HepG2 (cell line): ENCODE measurements at regions of chr2 and their contacts with region 1.

Region 1: GRCh38 chr2:230160112-230160660 is 59.6 kb downstream of the SP110 start:
- DNase-seq: peak; percentile 37
- ATAC-seq: peak; percentile 79
- H3K4me3 ChIP-seq: no peak overlapping the region
- H3K27ac ChIP-seq: no peak overlapping the region
- H3K4me1 ChIP-seq: no peaks in the 10 kb centered on the region
- H3K27me3 ChIP-seq: peaks cover 2 to 17% of the 10 kb centered on the region in 2 experiments; a peak in 3 of 5 replicates
- CTCF ChIP-seq: peak; percentile 83
- EP300 ChIP-seq: no peak
- POLR2A ChIP-seq: no peak
- RAD21 ChIP-seq: peak; percentile 55

Region 2: DNA sequence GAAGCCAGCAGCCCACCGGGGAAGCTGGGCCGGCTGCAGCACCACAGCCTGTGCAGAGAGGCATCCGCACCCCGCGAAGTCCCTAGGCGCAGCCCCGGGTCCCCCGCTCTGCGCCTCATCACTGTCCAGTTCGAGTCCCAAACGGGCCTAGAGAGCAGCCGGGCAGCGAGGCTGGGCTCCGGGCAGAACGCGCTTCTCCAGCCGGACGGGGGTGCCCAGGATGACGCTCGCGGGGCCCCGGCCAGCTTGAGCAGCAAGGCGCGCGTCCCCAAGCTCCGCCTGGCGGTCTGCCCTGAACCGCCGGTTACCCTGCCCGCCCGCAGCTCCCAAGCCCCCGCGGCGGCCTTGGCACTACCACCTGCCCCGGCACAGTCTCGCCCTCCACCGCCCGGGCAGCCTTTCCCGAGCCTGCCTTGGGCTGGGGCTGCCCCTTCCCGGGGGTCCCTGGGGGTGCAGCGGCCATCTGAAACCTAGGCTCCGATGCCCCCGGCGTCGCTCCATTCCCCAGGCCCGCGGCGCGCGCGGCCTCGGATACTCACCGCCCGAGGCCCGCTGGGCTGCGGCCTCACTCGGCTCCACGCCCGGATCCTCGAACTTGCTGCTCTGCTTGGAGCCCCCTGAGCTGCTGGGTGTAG is 92.1 kb before region 1 on chr2:
- CTCF ChIA-PET with region 1: interaction called, 14 read pairs
- POLR2A ChIA-PET with region 1: no interaction called
- in situ Hi-C with region 1: no loop called
- intact Hi-C with region 1: loop called (anchors 1 kb)
- DNase-seq: no peak
- ATAC-seq: peak; percentile 65
- H3K4me3 ChIP-seq: peak overlapping the region; percentile 9 to 61 (median 34); a peak in 5 of 6 replicates
- H3K27ac ChIP-seq: no peak overlapping the region
- H3K4me1 ChIP-seq: peaks cover 19% of the 10 kb centered on the region
- H3K27me3 ChIP-seq: peaks cover 4 to 39% of the 10 kb centered on the region in 2 experiments
- CTCF ChIP-seq: peak; percentile 30
- EP300 ChIP-seq: no peak
- POLR2A ChIP-seq: no peak
- RAD21 ChIP-seq: no peak